ENCODE measurements at regions of chr17 and their contacts with region 1.

Region 1: DNA sequence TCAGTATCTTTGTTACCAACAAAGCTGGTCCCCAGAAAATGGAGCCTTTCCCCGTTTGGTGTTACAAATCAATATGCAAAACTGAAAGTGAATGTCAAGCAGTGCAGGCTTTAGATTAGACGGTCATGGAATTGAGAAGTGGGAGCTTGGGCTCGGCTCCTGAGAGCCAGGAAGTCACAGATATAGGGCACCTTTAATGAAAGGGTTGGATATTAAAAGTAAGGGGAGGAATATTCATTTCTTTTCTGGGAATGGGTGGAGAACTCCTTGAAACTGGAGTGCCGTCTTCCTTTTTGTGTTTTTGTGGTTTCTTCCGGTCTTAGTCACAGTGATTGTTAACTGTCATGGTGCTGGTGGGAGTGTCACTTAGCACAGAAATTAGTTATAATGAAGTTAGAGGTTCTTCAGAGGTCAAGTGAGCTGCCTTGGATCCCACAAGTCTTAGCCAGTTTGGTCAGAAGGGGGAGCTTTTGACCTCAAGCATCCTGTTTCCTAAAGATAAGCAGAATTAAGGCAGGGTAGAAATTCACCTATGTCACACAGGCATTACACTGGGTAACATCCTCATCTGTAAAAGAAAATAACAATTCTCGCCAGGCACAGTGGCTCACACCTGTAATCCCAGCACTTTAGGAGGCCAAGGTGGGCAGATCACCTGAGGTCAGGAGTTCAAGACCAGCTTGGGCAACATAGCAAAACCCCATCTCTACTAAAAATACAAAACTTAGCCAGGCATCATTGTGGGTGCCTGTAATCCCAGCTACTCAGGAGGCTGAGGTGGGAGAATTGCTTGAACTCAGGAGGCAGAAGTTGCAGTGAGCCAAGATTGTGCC is 9.6 kb upstream of the EIF1 start:
- DNase-seq: peak in 12 of 14 experiments; percentile 18 to 94 (median 54)
- ATAC-seq: peak; percentile 91
- H3K4me3 ChIP-seq: peak overlapping the region; percentile 38
- H3K4me3 Mint-ChIP-seq: peak overlapping the region; percentile 83
- H3K27ac ChIP-seq: peak overlapping the region; percentile 73 to 74
- H3K27ac Mint-ChIP-seq: peak overlapping the region; percentile 87
- H3K4me1 ChIP-seq: peaks cover 40% of the 10 kb centered on the region
- H3K4me1 Mint-ChIP-seq: peaks cover 20% of the 10 kb centered on the region
- H3K27me3 ChIP-seq: no peaks in the 10 kb centered on the region
- H3K27me3 Mint-ChIP-seq: no peaks in the 10 kb centered on the region
- CTCF ChIP-seq: peak; percentile 28

Region 2: GRCh38 chr17:41655611-41656351 is 23.3 kb before region 1 on chr17:
- CTCF ChIA-PET with region 1: no interaction called
- POLR2A ChIA-PET with region 1: no interaction called
- intact Hi-C with region 1: no loop called
- DNase-seq: no peak
- ATAC-seq: no peak
- H3K4me3 ChIP-seq: no peak overlapping the region
- H3K4me3 Mint-ChIP-seq: no peak overlapping the region
- H3K27ac ChIP-seq: no peak overlapping the region
- H3K27ac Mint-ChIP-seq: no peak overlapping the region
- H3K4me1 ChIP-seq: no peaks in the 10 kb centered on the region
- H3K4me1 Mint-ChIP-seq: no peaks in the 10 kb centered on the region
- H3K27me3 ChIP-seq: no peaks in the 10 kb centered on the region
- H3K27me3 Mint-ChIP-seq: no peaks in the 10 kb centered on the region
- CTCF ChIP-seq: no peak

Region 3: GRCh38 chr17:41695954-41696756 is 17.0 kb after region 1 on chr17:
- CTCF ChIA-PET with region 1: interaction called, 77 read pairs
- POLR2A ChIA-PET with region 1: interaction called, 373 read pairs
- intact Hi-C with region 1: no loop called
- DNase-seq: peak; percentile 52 to 88 (median 74)
- ATAC-seq: peak; percentile 55
- H3K4me3 ChIP-seq: no peak overlapping the region
- H3K4me3 Mint-ChIP-seq: peak overlapping the region; percentile 51
- H3K27ac ChIP-seq: no peak overlapping the region
- H3K27ac Mint-ChIP-seq: peak overlapping the region; percentile 73
- H3K4me1 ChIP-seq: peaks cover 6% of the 10 kb centered on the region
- H3K4me1 Mint-ChIP-seq: peaks cover 32% of the 10 kb centered on the region
- H3K27me3 ChIP-seq: no peaks in the 10 kb centered on the region
- H3K27me3 Mint-ChIP-seq: peaks cover 3% of the 10 kb centered on the region
- CTCF ChIP-seq: peak; percentile 86